Endothelial cell of umbilical vein (primary cell): ENCODE measurements at regions of chr3 and their contacts with region 1.

Region 1: GRCh38 chr3:188294823-188295487 is 141.0 kb downstream of the LPP start:
- DNase-seq: peak; percentile 95
- H3K4me3 ChIP-seq: no peak overlapping the region
- H3K27ac ChIP-seq: peak overlapping the region; percentile 63
- H3K4me1 ChIP-seq: peaks cover 49% of the 10 kb centered on the region
- H3K27me3 ChIP-seq: no peaks in the 10 kb centered on the region
- CTCF ChIP-seq: no peak
- POLR2A ChIP-seq: no peak

Region 2: DNA sequence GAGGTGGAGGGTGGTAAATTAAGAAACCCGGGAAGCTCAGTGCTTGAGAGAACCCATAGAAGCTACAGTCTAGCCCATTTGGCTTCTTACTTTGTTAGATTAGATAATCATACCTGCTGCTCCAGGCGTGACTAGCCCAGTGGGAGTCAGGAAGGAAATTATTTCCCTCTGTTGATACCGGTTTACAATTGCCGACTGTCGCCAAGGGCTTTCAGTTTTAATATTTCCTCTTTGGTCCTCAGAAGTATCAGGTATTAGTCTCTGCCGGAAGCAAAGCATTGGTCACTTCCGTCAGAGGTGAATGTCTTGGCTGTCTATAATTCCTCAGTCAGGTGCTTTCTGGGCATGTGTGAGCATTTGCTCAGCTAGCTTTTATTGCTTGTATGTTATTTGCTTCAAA is 65.8 kb before region 1 on chr3:
- CTCF ChIA-PET with region 1: no interaction called
- POLR2A ChIA-PET with region 1: no interaction called
- dilution Hi-C with region 1: no loop called
- intact Hi-C with region 1: loop called (anchors 2 kb)
- DNase-seq: peak; percentile 77
- H3K4me3 ChIP-seq: no peak overlapping the region
- H3K27ac ChIP-seq: peak overlapping the region; percentile 39
- H3K4me1 ChIP-seq: peaks cover 17% of the 10 kb centered on the region
- H3K27me3 ChIP-seq: no peaks in the 10 kb centered on the region
- CTCF ChIP-seq: no peak
- POLR2A ChIP-seq: no peak

Region 3: GRCh38 chr3:188270423-188270972 is 24.5 kb before region 1 on chr3:
- CTCF ChIA-PET with region 1: interaction called, 13 read pairs
- POLR2A ChIA-PET with region 1: interaction called, 6 read pairs
- dilution Hi-C with region 1: no loop called
- intact Hi-C with region 1: no loop called
- DNase-seq: peak; percentile 84
- H3K4me3 ChIP-seq: no peak overlapping the region
- H3K27ac ChIP-seq: peak overlapping the region; percentile 70
- H3K4me1 ChIP-seq: peaks cover 69% of the 10 kb centered on the region
- H3K27me3 ChIP-seq: no peaks in the 10 kb centered on the region
- CTCF ChIP-seq: no peak
- POLR2A ChIP-seq: no peak